ENCODE measurements at regions of chr1 and their contacts with region 1.

Region 1: DNA sequence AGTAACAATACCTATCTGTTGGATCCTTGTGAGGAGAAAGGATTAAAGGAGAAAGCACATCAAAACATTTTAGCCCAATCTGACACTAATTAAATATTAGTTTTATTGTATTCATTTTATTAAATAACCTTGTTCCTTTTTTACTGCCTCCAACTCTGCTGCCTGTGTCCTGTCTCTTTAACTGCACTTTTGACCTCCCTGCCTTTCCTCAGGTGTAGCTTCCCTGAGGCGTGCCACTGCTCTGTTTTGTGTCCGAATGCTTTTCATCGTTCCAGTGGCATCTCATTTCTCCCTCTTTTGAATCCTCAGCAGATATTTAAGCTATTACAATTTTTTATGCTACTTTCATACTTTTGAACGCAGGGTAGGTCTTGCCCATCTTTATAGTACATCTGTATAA is 10.3 kb downstream of the SPRTN start:
- DNase-seq: no peak
- H3K4me3 ChIP-seq: no peak overlapping the region
- H3K27ac ChIP-seq: no peak overlapping the region
- H3K4me1 ChIP-seq: no peaks in the 10 kb centered on the region
- H3K27me3 ChIP-seq: no peaks in the 10 kb centered on the region
- CTCF ChIP-seq: no peak
- POLR2A ChIP-seq: no peak

Region 2: DNA sequence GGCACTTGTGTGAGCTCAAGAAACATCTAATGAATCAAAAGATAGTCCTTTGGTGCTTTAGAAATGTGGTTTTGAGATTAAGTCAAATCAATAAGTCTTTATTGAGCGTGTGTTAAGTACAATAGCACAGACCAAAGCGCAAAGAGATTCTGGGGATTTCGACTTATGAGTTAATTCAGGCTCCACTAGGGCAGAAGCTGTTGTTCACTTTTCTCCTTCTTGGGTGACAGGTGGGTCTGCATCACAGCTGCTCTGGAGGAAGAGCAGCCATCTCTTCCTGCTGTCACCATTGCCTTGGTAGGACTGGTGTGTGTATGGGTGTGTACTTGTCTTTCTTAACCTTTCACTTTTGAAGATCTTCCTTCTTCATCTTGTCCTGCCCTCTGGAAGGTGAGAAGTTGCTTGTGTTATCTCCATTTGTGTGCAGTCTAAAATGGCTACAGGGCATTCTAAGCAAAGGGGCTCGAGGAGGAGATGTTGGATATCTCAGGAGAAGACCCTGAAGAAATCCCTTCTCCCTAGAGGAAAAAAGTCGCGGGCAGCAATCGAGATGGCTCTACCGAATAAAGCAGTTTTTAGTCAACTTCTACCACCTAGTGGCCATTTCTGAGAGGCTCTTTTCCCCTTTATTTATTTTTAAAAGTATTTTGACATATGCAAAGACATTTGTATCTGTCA is 255.3 kb after region 1 on chr1:
- intact Hi-C with region 1: loop called (anchors 5 kb)
- DNase-seq: no peak
- H3K4me3 ChIP-seq: peak overlapping the region; percentile 40 to 54
- H3K27ac ChIP-seq: peak overlapping the region; percentile 36
- H3K4me1 ChIP-seq: peaks cover 27% of the 10 kb centered on the region
- H3K27me3 ChIP-seq: no peaks in the 10 kb centered on the region
- CTCF ChIP-seq: peak; percentile 69 to 86 (median 74)
- POLR2A ChIP-seq: no peak